GM18951 (cell line): ENCODE measurements at regions of chr17 and their contacts with region 1.

Region 1: GRCh38 chr17:64420143-64420971 is 28.6 kb upstream of the MILR1 start:
- POLR2A ChIP-seq: no peak

Region 2: GRCh38 chr17:64281962-64282727 is 138.2 kb before region 1 on chr17:
- in situ Hi-C with region 1: no loop called
- POLR2A ChIP-seq: no peak

Region 3: DNA sequence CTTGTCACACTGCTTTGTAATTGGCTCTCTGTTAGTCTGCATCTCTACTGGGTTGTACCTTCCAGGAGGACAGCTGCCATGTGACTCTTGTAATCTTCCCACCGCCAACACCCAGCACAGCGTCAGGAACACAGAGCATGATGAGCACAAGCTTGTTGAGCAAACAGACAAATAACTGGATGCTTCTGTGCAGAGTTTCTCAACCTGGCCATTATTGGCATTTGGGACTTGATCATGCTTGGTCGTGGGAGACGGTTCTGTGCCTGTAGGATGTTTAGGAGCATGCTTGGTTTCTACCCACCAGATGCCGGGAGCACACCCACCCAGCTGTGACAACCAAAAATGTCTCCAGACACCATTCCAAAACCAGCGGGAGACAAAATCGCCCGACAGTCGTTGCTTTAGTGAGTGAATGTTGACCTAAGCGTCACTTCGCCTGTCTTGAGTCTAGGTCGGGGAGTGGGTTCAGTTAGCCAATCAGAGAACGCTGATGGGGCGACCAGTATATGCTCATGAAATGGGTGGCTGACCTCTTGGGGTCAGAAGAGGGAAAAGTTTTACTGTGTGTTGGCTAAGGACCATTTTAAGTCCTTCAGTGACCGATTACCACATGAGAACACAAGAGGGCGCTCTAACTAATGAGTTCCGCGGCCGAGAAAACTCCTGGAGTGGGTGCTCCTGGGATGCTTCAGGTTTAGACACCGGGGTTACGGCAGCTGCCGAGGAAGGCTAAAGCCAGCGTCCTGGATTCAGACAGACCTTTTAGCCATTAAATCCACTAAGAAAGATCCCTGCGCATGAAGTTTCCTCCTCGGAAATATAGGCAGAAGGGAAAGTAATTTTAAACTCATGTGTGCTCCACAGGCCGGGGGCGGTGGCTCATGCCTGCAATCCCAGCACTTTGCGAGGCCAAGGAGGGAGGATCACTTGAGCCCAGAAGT is 99.5 kb before region 1 on chr17:
- in situ Hi-C with region 1: loop called (anchors 5 kb)
- POLR2A ChIP-seq: no peak

Region 4: DNA sequence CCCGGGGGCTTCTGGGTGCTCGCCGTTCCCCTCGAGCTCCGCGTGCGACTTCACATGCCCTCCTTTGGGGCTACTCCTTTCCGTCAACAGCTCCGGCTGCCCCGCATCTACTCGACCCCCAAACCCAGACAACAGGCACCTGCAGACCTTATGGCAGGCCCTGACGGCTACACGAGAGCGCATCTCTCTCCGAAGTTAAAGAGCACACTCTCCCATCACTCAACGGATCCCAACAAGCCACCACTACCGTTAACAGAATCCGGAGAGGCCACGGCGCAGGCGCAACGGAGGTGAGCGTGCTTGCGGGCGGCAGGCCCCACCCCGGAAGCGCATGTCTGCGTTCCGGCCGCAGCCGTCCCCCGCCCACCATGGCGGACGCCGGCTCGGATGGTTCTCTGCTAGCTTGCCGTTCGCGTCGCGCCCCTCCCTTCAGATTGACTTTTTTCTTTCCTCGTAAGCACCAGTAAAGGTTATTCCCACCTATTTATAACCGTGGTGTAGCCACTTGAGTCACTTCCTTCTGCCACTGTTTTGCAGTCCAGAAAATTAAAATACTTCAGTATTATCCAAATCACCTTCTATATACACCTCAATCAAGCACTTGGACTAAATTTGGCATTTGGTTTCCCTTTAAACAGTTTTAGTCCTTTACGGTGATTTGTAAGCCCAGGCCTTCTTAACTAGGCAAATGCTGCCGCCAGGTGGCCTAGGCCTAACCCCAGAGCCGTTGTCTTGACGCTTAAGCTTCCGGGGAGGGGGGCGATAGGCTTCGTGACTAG is 76.6 kb after region 1 on chr17 and contains the start of gene POLG2:
- in situ Hi-C with region 1: loop called (anchors 10 kb)
- POLR2A ChIP-seq: peak; percentile 93

Region 5: DNA sequence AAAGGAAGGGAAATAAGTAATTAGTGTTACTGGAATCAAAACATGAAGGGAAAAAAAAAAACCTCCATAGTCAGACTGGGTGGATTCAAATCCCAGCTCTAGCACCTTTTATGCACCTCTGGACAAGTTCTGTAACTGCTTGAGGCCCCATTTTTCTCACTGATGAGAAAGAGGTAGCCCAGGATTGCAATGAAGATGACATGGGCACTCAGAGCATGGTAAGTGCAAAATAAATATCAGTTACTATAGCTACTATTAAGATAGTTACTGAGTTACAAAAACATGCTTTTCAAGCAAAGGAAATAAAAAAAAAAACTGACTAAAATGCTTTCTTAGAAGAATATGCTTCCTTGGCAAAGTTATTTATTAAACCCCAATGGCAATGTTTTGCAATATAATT is 145.2 kb after region 1 on chr17:
- in situ Hi-C with region 1: no loop called
- POLR2A ChIP-seq: no peak

Region 6: DNA sequence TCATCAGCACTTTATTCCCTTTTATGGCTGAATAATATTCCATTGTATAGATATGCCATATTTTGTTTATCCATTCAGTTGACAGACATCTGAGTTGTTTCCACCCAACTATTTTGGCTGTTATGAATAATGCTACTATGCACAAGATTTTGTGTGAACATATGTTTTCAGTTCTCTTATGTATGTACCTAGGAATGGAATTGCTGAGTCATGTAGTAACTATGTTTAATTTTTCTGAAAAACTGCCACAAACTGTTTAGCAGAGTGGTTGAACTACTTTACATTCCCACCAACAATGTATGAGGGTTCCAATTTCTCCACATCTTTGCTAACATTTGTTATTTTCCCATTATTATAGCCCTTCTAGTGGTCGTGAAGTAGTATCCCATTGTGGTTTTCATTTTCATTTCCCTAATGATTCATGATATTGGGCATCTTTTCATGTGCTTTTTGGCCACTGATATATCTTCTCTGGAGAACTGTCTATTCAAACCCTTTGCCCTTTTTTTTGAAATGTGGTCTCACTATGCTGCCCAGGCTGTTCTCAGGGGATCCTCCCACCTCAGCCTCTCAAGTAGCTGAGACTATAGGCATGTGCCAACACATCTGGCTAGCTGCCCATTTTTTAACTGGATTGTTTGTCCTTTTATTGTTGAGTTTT is 215.4 kb after region 1 on chr17:
- in situ Hi-C with region 1: loop called (anchors 5 kb)
- POLR2A ChIP-seq: no peak